ENCODE measurements at regions of chr18 and their contacts with region 1.

Region 1: DNA sequence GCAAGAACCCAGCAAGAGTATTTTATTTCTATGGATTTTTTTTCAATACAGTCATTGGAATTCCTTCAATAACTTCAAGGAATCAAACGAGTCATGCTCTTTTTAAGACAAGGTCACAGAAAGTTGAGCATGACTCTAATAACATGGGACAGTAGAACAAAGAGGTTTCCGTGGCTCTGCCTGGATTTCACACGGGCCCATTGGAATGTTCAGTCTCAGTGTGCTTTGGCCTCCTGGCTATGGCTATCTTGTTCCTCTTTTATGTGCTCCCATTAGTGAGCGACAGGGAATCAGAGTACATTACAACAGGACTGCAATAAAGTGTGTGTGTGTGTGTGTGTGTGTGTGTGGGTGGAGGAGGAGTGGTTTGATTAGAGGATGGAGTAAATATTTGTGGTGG is 312.4 kb downstream of the DCC start:
- DNase-seq: no peak
- H3K4me3 ChIP-seq: no peak overlapping the region
- H3K27ac ChIP-seq: no peak overlapping the region
- H3K4me1 ChIP-seq: no peaks in the 10 kb centered on the region
- H3K27me3 ChIP-seq: no peaks in the 10 kb centered on the region
- CTCF ChIP-seq: no peak

Region 2: DNA sequence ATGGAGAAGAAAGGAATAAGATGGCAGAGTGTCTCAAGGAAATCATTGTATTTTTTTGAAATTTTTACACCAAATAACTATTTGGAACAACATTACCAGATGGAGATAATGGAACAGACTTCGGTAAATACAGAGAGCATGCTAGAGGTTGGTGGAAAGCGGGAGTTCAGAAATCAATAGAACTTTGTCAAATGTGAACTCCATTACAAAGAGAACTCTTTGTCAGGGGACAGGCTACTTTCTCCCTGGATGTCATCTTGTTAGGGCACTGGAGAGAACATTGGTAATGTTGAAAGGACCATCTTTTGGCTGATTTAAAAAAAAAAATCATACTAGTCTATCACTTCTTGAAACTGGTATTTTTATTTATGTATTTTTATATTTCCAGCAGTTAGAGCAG is 281.6 kb before region 1 on chr18:
- CTCF ChIA-PET with region 1: no interaction called
- POLR2A ChIA-PET with region 1: no interaction called
- intact Hi-C with region 1: no loop called
- DNase-seq: no peak
- H3K4me3 ChIP-seq: no peak overlapping the region
- H3K27ac ChIP-seq: no peak overlapping the region
- H3K4me1 ChIP-seq: peaks cover 55% of the 10 kb centered on the region
- H3K27me3 ChIP-seq: no peaks in the 10 kb centered on the region
- CTCF ChIP-seq: no peak

Region 3: DNA sequence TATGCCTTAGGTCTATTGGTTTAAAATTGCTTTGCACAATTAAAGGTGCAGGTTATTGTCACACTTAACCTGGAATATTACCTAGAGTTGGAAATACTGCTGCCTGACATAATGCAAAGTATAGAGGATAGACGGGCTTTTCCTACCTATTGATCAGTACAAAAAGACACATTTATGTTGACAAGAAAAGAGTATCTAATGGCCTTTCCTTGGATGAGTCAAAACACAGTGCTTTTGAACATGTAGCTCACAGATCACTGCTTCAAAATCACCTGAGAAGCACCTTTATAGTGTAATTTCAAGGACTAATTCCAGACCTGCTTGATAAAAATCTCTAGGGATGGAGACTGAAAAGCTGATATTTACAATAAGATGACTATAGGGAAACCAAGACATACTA is 49.6 kb before region 1 on chr18:
- CTCF ChIA-PET with region 1: no interaction called
- POLR2A ChIA-PET with region 1: interaction called, 16 read pairs
- intact Hi-C with region 1: no loop called
- DNase-seq: no peak
- H3K4me3 ChIP-seq: no peak overlapping the region
- H3K27ac ChIP-seq: no peak overlapping the region
- H3K4me1 ChIP-seq: peaks cover 42% of the 10 kb centered on the region
- H3K27me3 ChIP-seq: no peaks in the 10 kb centered on the region
- CTCF ChIP-seq: no peak